Gastrocnemius medialis (tissue), 4 donors: ENCODE measurements at regions of chr2 and their contacts with region 1.

Region 1: GRCh38 chr2:231604685-231605606 is 12.3 kb downstream of the TEX44 start:
- DNase-seq: peak; percentile 96 to 98
- ATAC-seq: peak; percentile 84 to 88
- H3K4me3 ChIP-seq: peak overlapping the region; percentile 52 to 77 (median 61)
- H3K27ac ChIP-seq: peak overlapping the region; percentile 90 to 99 (median 97)
- H3K4me1 ChIP-seq: peaks cover 26 to 29% of the 10 kb centered on the region in 2 donors
- H3K27me3 ChIP-seq: no peaks in the 10 kb centered on the region
- CTCF ChIP-seq: peak in 2 of 5 experiments; percentile 12 to 41
- POLR2A ChIP-seq: peak; percentile 70 to 79

Region 2: GRCh38 chr2:231514103-231514950 is 90.6 kb before region 1 on chr2:
- in situ Hi-C with region 1: loop called in 1 of 4 experiments (anchors 10 kb)
- intact Hi-C with region 1: loop called (anchors 1 kb)
- DNase-seq: peak; percentile 98 to 99
- ATAC-seq: peak; percentile 93 to 95
- H3K4me3 ChIP-seq: peak overlapping the region; percentile 75 to 97 (median 89)
- H3K27ac ChIP-seq: peak overlapping the region; percentile 92 to 99 (median 96)
- H3K4me1 ChIP-seq: peaks cover 6 to 21% of the 10 kb centered on the region in 2 donors
- H3K27me3 ChIP-seq: no peaks in the 10 kb centered on the region
- CTCF ChIP-seq: no peak
- POLR2A ChIP-seq: peak; percentile 90 to 91

Region 3: GRCh38 chr2:231545105-231545902 is 59.6 kb before region 1 on chr2:
- in situ Hi-C with region 1: no loop called
- intact Hi-C with region 1: no loop called
- DNase-seq: peak in 1 of 2 donors; percentile 30
- ATAC-seq: peak; percentile 28 to 45
- H3K4me3 ChIP-seq: no peak overlapping the region
- H3K27ac ChIP-seq: peak overlapping the region; percentile 21 to 37 (median 33)
- H3K4me1 ChIP-seq: peaks cover 6 to 20% of the 10 kb centered on the region in 2 donors
- H3K27me3 ChIP-seq: no peaks in the 10 kb centered on the region
- CTCF ChIP-seq: no peak
- POLR2A ChIP-seq: no peak

Region 4: GRCh38 chr2:231563378-231563961 is 41.5 kb before region 1 on chr2:
- in situ Hi-C with region 1: no loop called
- intact Hi-C with region 1: loop called (anchors 1 kb)
- DNase-seq: no peak
- ATAC-seq: no peak
- H3K4me3 ChIP-seq: no peak overlapping the region
- H3K27ac ChIP-seq: no peak overlapping the region
- H3K4me1 ChIP-seq: no peaks in the 10 kb centered on the region
- H3K27me3 ChIP-seq: no peaks in the 10 kb centered on the region
- CTCF ChIP-seq: peak in 2 of 5 experiments; percentile 48 to 59
- POLR2A ChIP-seq: no peak

Region 5: DNA sequence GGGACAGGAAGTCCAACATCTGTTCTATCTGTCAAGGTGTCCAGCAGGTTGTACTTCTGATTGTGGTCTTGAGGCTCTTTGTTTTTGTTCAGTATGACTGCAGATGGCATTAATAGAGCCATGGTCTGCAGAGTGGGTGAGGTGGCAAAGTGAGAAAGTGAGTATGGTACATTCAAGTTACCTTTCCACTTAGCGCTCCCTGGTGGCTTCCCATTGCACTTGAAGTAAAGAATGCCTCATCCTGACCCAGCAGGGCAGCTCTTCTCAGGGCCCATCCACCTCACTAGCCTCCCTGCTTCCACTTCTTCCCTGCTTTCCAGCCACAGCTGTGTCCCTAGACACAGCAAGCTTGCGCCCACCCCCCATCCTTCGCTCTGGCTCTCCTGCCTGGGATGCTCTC is 625.6 kb after region 1 on chr2:
- in situ Hi-C with region 1: no loop called
- intact Hi-C with region 1: no loop called
- DNase-seq: no peak
- ATAC-seq: no peak
- H3K4me3 ChIP-seq: no peak overlapping the region
- H3K27ac ChIP-seq: no peak overlapping the region
- H3K4me1 ChIP-seq: peaks cover 0 to 11% of the 10 kb centered on the region in 2 donors
- H3K27me3 ChIP-seq: no peaks in the 10 kb centered on the region
- CTCF ChIP-seq: no peak
- POLR2A ChIP-seq: no peak